Esophagus muscularis mucosa (tissue), 4 donors: ENCODE measurements at regions of chr9 and their contacts with region 1.

Region 1: DNA sequence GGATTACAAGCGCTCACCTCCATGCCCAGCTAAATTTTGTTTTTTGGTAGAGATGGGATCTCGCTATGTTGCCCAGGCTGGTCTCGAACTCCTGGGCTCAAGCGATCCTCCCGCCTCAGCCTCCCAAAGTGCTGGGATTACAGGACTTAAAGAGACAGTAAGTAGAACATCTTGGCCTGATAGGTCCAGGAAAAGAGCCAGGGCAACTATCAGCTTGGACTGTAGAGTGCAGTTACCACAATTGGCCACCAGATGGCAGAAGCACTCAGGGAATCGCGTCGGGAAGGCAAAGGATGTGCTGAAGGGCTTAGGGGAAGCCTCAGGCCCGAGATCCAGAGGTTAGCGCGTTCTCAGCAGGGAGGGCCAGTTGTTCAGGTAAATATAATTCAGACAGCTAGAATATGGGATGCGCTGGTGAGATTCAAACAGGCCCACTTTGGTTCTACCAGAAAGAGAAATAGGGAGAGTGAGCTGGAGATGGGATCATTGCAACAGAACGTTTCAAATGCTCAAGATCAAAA is 21.5 kb downstream of the C9orf57 start:
- DNase-seq: no peak
- H3K4me3 ChIP-seq: no peak overlapping the region
- H3K27ac ChIP-seq: no peak overlapping the region
- H3K4me1 ChIP-seq: peaks cover 0 to 10% (median 3%) of the 10 kb centered on the region in 4 donors
- H3K27me3 ChIP-seq: no peaks in the 10 kb centered on the region
- CTCF ChIP-seq: peak; percentile 93 to 97 (median 95)
- EP300 ChIP-seq: no peak
- POLR2A ChIP-seq: no peak

Region 2: GRCh38 chr9:72271613-72272478 is 232.9 kb after region 1 on chr9:
- intact Hi-C with region 1: loop called (anchors 1 kb)
- DNase-seq: peak; percentile 92
- H3K4me3 ChIP-seq: no peak overlapping the region
- H3K27ac ChIP-seq: no peak overlapping the region
- H3K4me1 ChIP-seq: no peaks in the 10 kb centered on the region
- H3K27me3 ChIP-seq: no peaks in the 10 kb centered on the region
- CTCF ChIP-seq: peak; percentile 80 to 89 (median 81)
- EP300 ChIP-seq: no peak
- POLR2A ChIP-seq: no peak

Region 3: GRCh38 chr9:72823971-72824370 is 785.0 kb after region 1 on chr9:
- intact Hi-C with region 1: loop called (anchors 5 kb)
- DNase-seq: no peak
- H3K4me3 ChIP-seq: no peak overlapping the region
- H3K27ac ChIP-seq: no peak overlapping the region
- H3K4me1 ChIP-seq: peaks cover 0 to 4% (median 0%) of the 10 kb centered on the region in 4 donors
- H3K27me3 ChIP-seq: no peaks in the 10 kb centered on the region
- CTCF ChIP-seq: no peak
- EP300 ChIP-seq: no peak
- POLR2A ChIP-seq: no peak